ENCODE measurements at regions of chr1 and their contacts with region 1.

Region 1: DNA sequence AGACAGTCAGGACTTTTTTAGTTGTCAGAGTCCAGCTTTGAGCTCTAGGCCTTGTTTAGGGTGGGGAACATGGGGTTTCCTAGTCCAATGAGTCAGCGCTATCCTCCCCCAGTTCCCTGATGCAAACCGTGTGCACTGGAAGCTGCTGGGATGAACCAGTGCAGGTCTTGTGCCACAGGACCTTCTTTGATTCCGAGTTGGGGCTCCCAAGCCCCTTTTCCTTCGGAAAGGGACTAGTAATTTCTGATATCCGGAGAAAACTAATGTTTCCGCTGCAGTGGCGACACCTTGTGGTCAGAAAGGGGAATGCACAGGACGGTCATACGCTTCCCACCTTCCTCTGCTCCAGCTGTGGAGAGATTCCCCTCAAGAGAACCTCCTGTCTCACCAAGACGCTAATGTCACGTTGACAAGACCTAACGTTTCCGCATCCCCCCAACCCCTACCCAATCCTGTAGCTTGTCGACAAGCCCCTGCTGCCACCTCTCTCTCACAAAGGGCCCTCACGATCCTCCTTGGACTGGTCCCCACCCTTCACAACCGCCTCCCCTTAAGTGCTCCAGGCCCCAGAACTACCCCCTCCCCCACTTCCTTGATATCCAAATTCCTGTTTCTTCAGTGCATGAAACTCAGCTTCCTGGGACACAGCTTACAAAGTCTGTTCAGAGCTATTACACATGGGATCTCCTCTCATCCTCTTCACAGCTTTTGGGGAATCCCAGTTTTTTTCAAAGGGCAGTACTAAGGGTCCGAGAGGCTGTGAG is 30.9 kb downstream of the GPA33 start:
- DNase-seq: peak in 1 of 2 donors; percentile 81
- ATAC-seq: peak; percentile 52

Region 2: GRCh38 chr1:166884040-166884642 is 175.1 kb before region 1 on chr1:
- intact Hi-C with region 1: loop called in 1 of 2 experiments (anchors 5 kb)
- DNase-seq: peak; percentile 33 to 56
- ATAC-seq: peak; percentile 95

Region 3: DNA sequence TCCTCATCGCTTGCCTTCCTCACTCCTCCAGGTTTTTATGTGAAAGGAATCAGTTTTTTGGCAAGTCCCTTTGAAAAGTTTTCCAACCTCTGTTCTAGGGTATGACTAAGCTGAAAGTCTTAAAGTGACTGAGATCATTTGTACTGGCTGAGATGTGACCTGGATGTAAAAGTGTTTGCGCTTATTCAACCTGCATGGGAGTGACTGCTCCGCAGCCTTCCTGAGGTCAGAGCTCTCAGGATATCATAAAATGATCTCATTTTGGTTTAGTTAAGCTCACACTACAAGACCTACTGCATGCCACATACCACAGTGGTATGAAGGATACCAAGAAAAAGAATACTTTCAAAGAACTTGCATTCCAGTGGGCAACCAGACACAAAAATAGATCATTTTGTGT is 153.3 kb before region 1 on chr1:
- intact Hi-C with region 1: loop called in 1 of 2 experiments (anchors 5 kb)
- DNase-seq: no peak
- ATAC-seq: no peak

Region 4: GRCh38 chr1:166947398-166948043 is 111.7 kb before region 1 on chr1:
- intact Hi-C with region 1: no loop called
- DNase-seq: peak; percentile 26 to 35
- ATAC-seq: peak; percentile 64

Region 5: GRCh38 chr1:167165948-167166689 is 106.9 kb after region 1 on chr1:
- intact Hi-C with region 1: no loop called
- DNase-seq: peak; percentile 49 to 58
- ATAC-seq: peak; percentile 73

Region 6: DNA sequence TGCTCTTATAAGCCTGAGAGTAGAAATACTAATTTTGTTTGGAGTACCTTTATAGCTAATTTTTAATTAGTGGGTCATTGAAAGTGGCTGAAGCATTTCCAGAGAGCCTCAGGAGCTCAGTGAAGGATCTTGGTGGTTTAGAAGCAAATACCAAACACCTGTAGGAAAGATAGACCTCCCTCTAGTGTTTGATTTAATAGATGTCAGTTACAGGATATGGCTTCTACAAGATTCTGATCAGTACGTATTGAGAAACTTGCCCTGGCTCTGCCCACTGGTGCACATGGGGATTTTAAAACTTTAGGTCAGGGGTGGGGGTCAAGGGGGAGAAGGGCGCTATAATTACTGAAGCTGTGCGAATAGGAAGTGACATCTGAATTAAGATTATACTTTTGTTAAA is 283.6 kb after region 1 on chr1:
- intact Hi-C with region 1: no loop called
- DNase-seq: no peak
- ATAC-seq: peak; percentile 86